Kidney (tissue), 22 donors: ENCODE measurements at regions of chr19 and their contacts with region 1.

Region 1: DNA sequence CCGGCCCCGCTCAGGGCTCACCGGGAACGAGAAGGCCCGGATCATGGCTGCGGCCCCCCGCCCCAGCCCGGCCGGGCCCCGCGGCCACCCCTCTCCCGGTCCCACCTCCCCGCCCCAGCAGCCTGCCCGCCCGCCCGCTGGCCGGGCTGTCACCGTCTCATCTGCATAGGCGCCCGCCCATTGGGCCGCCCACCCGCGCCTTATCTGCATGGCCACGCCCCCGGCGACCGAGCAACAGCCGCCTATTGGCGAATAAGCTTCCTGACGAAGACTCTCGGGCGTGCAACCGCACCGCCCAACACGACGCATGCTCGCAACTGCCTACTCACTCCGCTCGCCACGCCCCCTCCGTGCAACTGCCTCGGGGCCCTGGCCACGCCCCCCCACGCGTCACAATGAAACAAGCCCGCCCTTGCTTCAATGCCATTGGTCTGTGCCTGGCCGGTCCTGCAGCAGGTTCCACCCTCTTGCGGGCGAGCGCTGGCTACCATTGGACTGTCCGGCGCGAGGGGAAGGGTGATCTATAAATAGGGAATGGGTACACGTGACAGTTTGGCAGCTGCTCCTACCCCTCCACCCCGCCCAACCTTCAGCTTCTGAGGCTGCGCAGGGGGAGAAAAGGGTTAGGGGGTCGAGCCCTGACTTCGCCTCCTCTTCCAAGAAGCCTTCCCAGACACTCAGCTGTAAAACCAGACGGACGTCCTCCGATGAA is at the start of gene DACT3:
- DNase-seq: peak; percentile 100
- H3K4me3 ChIP-seq: peak within 1 kb of the TSS; percentile 58 to 84 (median 58)
- H3K27ac ChIP-seq: peak within 1 kb of the TSS; percentile 59 to 83
- H3K4me1 ChIP-seq: peaks cover 0 to 5% (median 0%) of the 10 kb centered on the region in 3 donors
- H3K27me3 ChIP-seq: no peaks in the 10 kb centered on the region
- CTCF ChIP-seq: no peak
- total RNA-seq, gene DACT3: 10.4 TPM

Region 2: GRCh38 chr19:46299004-46299509 is 362.1 kb before region 1 on chr19:
- intact Hi-C with region 1: no loop called
- DNase-seq: peak; percentile 92 to 99 (median 96)
- H3K4me3 ChIP-seq: peak overlapping the region in 2 of 3 donors; percentile 38 to 56
- H3K27ac ChIP-seq: peak overlapping the region; percentile 60 to 68
- H3K4me1 ChIP-seq: peaks cover 7 to 29% (median 14%) of the 10 kb centered on the region in 3 donors
- H3K27me3 ChIP-seq: no peaks in the 10 kb centered on the region
- CTCF ChIP-seq: no peak

Region 3: DNA sequence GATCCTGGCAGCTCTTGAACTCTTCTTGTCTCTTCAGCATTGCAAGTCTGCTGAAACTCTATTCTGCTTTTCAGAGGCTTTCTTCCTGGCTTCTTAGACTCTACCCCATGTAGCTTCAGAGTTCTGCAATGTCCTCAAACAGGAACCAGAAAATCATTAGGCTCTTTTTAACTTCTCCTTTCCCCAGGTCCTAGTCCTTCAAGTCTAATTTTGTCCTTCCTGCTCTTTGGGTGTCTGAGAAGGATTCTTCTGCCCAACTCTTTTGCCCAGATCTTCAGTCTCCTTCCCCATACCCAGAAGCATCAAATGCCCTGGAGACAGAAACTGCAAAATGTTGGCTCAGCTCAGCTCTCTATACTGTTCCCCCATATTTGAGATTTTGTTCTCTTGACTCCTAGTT is 110.0 kb before region 1 on chr19:
- intact Hi-C with region 1: no loop called
- DNase-seq: no peak
- H3K4me3 ChIP-seq: no peak overlapping the region
- H3K27ac ChIP-seq: no peak overlapping the region
- H3K4me1 ChIP-seq: no peaks in the 10 kb centered on the region
- H3K27me3 ChIP-seq: no peaks in the 10 kb centered on the region
- CTCF ChIP-seq: no peak

Region 4: DNA sequence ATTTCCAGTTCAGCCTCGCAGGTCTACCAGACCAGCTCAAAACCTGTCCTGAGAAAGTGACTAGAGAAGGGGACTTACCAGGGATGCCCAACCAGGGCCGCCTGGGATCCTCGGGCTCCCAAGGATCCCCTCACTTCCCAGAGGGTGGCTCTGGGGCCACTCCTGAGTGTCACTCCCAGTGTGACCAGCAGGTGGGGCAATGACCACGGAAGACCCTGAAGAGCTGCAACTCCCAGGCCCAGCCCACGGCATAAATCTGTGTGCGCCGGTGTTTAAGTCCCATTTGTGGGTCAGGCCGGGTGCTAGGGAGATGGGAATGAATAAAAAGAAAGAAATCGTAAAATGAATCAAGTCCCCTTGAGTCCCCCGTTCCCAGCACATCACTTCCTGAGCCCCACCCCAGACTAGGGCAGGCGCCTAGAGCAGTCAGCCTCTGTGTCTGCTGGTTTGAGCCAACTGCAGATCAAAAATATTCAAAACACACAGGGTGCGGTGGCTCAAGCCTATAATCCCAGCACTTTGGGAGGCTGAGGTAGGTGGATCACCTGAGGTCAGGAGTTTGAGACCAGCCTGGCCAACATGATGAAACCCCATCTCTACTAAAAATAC is 47.0 kb before region 1 on chr19:
- intact Hi-C with region 1: loop called (anchors 5 kb)
- DNase-seq: peak; percentile 84 to 93 (median 87)
- H3K4me3 ChIP-seq: no peak overlapping the region
- H3K27ac ChIP-seq: no peak overlapping the region
- H3K4me1 ChIP-seq: peaks cover 0 to 6% (median 0%) of the 10 kb centered on the region in 3 donors
- H3K27me3 ChIP-seq: no peaks in the 10 kb centered on the region
- CTCF ChIP-seq: peak; percentile 83